HCT116 (cell line): ENCODE measurements at regions of chr11 and their contacts with region 1.

Region 1: GRCh38 chr11:32231905-32232493 is 141.1 kb downstream of the RCN1 start:
- DNase-seq: peak; percentile 36
- ATAC-seq: peak; percentile 98
- H3K4me3 ChIP-seq: no peak overlapping the region
- H3K27ac ChIP-seq: no peak overlapping the region
- H3K4me1 ChIP-seq: no peaks in the 10 kb centered on the region
- H3K27me3 ChIP-seq: no peaks in the 10 kb centered on the region
- CTCF ChIP-seq: peak; percentile 43 to 98 (median 96); a peak in 5 of 6 replicates
- POLR2A ChIP-seq: no peak
- RAD21 ChIP-seq: peak; percentile 49

Region 2: GRCh38 chr11:31619980-31620379 is 612.0 kb before region 1 on chr11:
- CTCF ChIA-PET with region 1: no interaction called
- POLR2A ChIA-PET with region 1: no interaction called
- RAD21 ChIA-PET with region 1: no interaction called
- intact Hi-C with region 1: no loop called
- DNase-seq: no peak
- ATAC-seq: no peak
- H3K4me3 ChIP-seq: no peak overlapping the region
- H3K27ac ChIP-seq: no peak overlapping the region
- H3K4me1 ChIP-seq: no peaks in the 10 kb centered on the region
- H3K27me3 ChIP-seq: no peaks in the 10 kb centered on the region
- CTCF ChIP-seq: no peak
- POLR2A ChIP-seq: no peak
- RAD21 ChIP-seq: no peak

Region 3: DNA sequence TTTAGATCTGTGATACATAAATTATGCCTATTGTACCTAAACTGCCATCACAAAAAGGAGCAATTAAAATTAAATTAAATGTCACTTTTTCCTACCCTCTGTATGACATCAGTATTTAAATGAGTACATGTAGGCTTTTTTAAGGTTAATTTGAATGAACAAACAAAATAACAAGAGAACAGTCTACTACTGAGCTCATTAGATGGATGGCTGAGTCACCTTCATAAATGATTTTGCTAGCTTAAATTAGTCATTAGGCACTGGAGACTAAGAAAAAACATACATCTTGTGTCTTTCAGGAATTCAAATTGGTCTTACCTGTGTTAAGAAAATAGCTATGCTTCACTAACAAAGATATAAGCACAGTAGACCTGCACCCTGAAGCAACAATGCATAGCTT is 12.5 kb after region 1 on chr11:
- CTCF ChIA-PET with region 1: interaction called, 10 read pairs
- POLR2A ChIA-PET with region 1: no interaction called
- RAD21 ChIA-PET with region 1: no interaction called
- intact Hi-C with region 1: no loop called
- DNase-seq: no peak
- ATAC-seq: no peak
- H3K4me3 ChIP-seq: no peak overlapping the region
- H3K27ac ChIP-seq: no peak overlapping the region
- H3K4me1 ChIP-seq: no peaks in the 10 kb centered on the region
- H3K27me3 ChIP-seq: no peaks in the 10 kb centered on the region
- CTCF ChIP-seq: no peak
- POLR2A ChIP-seq: no peak
- RAD21 ChIP-seq: no peak